Activated CD4-positive, alpha-beta memory T cell treated with anti-CD3 and anti-CD28 coated beads for 36 hours (primary cell): ENCODE measurements at regions of chr7 and their contacts with region 1.

Region 1: DNA sequence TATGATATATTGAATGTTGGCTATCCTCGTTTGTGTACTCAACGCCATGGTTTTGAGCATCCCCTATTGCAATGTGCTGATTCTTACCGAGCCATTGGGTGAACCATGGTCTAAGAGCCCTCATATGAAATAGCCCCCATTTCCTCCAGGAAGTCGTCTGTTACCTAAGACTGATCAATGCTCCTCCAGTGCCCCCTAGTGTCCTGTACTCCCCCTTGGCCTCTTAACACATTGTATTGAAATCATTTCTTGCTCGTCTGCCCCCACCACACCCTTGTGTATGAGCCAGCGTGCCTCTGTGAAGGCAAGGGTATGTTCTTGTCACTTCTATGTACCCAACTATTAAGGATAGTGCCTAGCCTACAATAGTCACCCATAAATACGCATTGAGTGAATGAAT is 11.2 kb upstream of the SLC35B4 start:
- DNase-seq: peak; percentile 61
- H3K4me3 Mint-ChIP-seq: no peak overlapping the region
- H3K27ac Mint-ChIP-seq: no peak overlapping the region
- H3K4me1 Mint-ChIP-seq: no peaks in the 10 kb centered on the region
- H3K27me3 Mint-ChIP-seq: peaks cover 15% of the 10 kb centered on the region

Region 2: GRCh38 chr7:134140889-134141867 is 186.7 kb before region 1 on chr7:
- CTCF ChIA-PET with region 1: no interaction called
- POLR2A ChIA-PET with region 1: no interaction called
- intact Hi-C with region 1: loop called (anchors 5 kb)
- DNase-seq: peak; percentile 69
- H3K4me3 Mint-ChIP-seq: no peak overlapping the region
- H3K27ac Mint-ChIP-seq: no peak overlapping the region
- H3K4me1 Mint-ChIP-seq: no peaks in the 10 kb centered on the region
- H3K27me3 Mint-ChIP-seq: no peaks in the 10 kb centered on the region